ENCODE measurements at regions of chr6 and their contacts with region 1.

Region 1: DNA sequence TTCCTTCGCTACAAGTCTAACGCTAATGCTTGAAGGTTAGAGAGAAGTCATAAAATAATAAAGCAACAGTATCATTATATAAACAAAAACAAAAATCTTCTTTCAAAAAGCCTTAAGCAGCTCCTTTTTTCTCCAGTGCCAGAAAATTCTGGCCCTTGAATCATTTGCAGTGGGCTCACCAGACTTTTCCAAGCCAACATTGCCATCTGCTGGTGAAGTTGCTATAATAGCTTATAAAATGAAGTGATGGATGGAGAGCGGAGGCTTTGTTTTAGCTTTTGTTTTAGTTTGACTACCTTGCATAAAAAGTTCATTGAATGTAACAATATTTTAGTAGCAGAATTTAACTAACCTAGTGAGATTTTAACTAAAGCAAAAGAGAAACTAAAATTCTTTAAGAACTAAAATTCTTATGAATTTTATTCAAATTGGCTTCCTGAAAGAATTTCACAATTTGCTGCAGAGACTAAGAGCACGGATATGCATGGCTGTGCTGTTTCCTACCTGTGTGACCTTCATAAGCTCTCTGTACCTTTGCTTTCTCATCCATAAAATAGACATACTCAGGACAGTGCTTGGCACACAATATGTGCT is 44.8 kb upstream of the SLC2A12 start:
- DNase-seq: peak; percentile 75
- ATAC-seq: peak; percentile 71
- H3K4me3 ChIP-seq: no peak overlapping the region
- H3K27ac ChIP-seq: no peak overlapping the region
- H3K4me1 ChIP-seq: no peaks in the 10 kb centered on the region
- H3K27me3 ChIP-seq: peaks cover 8% of the 10 kb centered on the region
- CTCF ChIP-seq: peak; percentile 81
- POLR2A ChIP-seq: no peak
- RAD21 ChIP-seq: peak; percentile 92

Region 2: DNA sequence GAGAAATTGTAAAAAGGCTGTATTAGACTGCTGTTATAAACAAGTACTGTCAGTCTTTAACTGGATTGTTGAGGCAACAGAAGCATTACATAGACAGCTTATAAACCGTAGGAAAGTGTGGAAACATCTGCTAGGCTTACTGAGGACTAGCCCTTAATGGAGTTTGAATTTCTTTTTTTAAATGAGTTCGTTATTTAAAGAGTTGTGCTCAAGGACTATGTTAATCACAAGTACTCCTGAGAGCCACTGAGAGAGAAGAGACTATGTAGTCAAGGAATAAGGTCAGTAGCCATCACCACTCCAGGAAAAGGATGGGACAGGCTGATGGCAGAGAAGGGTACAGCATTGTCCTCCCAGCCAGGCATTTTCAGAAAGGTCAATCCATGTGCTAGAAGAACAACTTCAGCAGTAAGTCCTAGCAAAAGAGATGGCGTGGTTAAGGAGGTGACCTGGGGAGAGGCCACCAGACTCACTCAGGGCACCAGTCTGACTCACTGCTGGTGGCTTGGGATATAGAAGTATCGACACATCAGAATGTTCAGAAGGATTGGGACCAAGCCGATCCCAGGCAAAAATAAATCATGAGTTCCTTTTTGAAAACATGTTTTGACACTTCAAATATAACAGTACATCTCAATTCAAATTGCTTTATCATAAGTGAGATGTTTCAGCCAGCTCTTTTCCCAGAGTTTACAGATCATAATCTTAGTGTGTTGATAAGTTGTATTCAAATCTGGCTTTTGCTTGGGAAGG is 1276.4 kb before region 1 on chr6:
- CTCF ChIA-PET with region 1: no interaction called
- POLR2A ChIA-PET with region 1: no interaction called
- dilution Hi-C with region 1: no loop called
- in situ Hi-C with region 1: no loop called
- intact Hi-C with region 1: loop called (anchors 10 kb)
- DNase-seq: peak; percentile 52
- ATAC-seq: peak; percentile 41
- H3K4me3 ChIP-seq: no peak overlapping the region
- H3K27ac ChIP-seq: peak overlapping the region; percentile 42; the same call in 1 of the 2 replicates
- H3K4me1 ChIP-seq: peaks cover 4% of the 10 kb centered on the region
- H3K27me3 ChIP-seq: no peaks in the 10 kb centered on the region
- CTCF ChIP-seq: no peak
- POLR2A ChIP-seq: peak; percentile 45
- RAD21 ChIP-seq: no peak

Region 3: DNA sequence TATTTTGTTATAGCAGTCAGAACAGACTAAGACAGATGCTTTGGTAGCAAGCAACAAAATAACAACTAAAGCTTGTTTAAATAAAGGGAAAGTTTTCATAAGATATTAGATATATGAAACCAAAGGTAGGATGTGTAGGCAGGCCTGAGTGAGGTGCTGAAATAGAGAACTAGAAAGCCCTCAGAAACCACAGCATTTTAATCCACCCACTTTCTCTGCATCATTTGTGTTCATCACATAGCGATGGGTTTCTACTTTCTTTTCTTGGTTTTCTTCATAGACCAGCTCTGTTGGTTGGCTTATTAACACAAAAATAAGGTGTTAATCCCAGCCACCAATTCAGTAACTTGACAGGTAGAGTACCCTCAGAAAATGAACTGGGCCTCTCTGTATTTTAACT is 1224.3 kb before region 1 on chr6:
- CTCF ChIA-PET with region 1: no interaction called
- POLR2A ChIA-PET with region 1: no interaction called
- dilution Hi-C with region 1: no loop called
- in situ Hi-C with region 1: loop called (anchors 25 kb)
- intact Hi-C with region 1: no loop called
- DNase-seq: no peak
- ATAC-seq: no peak
- H3K4me3 ChIP-seq: no peak overlapping the region
- H3K27ac ChIP-seq: no peak overlapping the region
- H3K4me1 ChIP-seq: no peaks in the 10 kb centered on the region
- H3K27me3 ChIP-seq: peaks cover 2% of the 10 kb centered on the region; the same call in 1 of the 2 replicates
- CTCF ChIP-seq: no peak
- POLR2A ChIP-seq: no peak
- RAD21 ChIP-seq: no peak

Region 4: GRCh38 chr6:133314947-133315346 is 782.3 kb before region 1 on chr6:
- CTCF ChIA-PET with region 1: no interaction called
- POLR2A ChIA-PET with region 1: no interaction called
- dilution Hi-C with region 1: no loop called
- in situ Hi-C with region 1: no loop called
- intact Hi-C with region 1: no loop called
- DNase-seq: no peak
- ATAC-seq: no peak
- H3K4me3 ChIP-seq: no peak overlapping the region
- H3K27ac ChIP-seq: no peak overlapping the region
- H3K4me1 ChIP-seq: peaks cover 5% of the 10 kb centered on the region
- H3K27me3 ChIP-seq: no peaks in the 10 kb centered on the region
- CTCF ChIP-seq: no peak
- POLR2A ChIP-seq: no peak
- RAD21 ChIP-seq: no peak

Region 5: DNA sequence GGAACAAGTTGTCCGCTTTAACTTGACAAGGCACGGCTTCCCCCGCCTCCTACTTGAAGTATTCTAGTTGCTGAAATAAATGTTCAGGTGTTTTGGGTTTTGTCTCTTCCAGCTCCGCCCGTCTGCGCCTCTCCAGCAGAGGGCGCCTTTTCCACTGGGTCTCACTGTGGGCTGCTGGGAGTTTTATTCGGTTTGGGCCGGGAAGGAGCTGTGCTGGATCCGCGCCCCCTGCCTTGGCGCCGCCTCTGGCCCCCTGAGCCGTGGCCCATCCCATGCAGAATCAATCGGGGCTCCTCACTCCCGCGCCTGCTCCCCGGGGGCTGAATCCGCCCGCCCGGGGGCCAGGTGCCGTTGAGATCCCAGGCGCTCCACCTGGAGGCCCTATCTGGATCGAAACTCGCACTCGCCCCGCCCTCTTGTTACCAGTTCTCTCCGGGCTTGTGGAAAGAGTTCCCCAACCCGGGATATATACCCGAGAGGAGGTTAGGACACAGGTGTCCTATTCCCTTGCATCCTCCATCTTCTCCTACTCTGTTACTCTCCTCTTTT is 259.3 kb before region 1 on chr6:
- CTCF ChIA-PET with region 1: no interaction called
- POLR2A ChIA-PET with region 1: no interaction called
- dilution Hi-C with region 1: no loop called
- in situ Hi-C with region 1: no loop called
- intact Hi-C with region 1: loop called (anchors 10 kb)
- DNase-seq: no peak
- ATAC-seq: no peak
- H3K4me3 ChIP-seq: no peak overlapping the region
- H3K27ac ChIP-seq: no peak overlapping the region
- H3K4me1 ChIP-seq: peaks cover 8% of the 10 kb centered on the region
- H3K27me3 ChIP-seq: no peaks in the 10 kb centered on the region
- CTCF ChIP-seq: peak; percentile 30; the same call in 1 of the 2 replicates
- POLR2A ChIP-seq: no peak
- RAD21 ChIP-seq: peak; percentile 30

Region 6: DNA sequence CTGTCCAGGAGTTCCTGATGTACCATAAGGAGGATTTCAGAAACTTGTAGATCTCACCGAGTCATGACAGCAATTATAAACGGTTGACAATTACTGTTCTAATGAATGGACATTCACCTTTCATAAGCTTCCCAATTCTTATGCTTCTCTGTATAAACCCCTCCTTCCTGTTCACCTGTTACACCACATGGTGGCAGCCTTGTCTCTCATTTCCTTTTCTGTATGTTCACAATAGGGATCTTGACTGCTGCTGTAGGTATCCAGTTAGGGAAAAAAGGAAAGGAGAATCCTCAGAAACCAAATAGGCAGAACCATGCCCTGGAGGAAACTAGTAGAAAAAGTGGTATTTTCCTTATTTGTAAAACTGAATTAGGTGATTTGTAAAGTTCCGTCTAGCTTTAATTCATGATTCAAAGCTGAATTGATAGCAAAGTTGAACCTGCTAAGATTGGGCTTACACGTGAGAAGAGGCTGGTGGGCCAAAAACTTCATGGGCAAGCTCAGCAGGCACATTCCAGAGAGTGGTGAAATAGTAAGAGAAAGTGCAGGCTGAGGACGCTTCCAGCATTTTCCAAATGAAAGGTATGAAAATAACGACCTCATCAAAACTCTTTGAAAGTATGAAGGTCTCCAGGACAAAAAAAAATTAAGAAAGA is 173.1 kb before region 1 on chr6:
- CTCF ChIA-PET with region 1: interaction called, 88 read pairs
- POLR2A ChIA-PET with region 1: no interaction called
- dilution Hi-C with region 1: no loop called
- in situ Hi-C with region 1: loop called (anchors 5 kb)
- intact Hi-C with region 1: loop called (anchors 1 kb)
- DNase-seq: peak; percentile 84
- ATAC-seq: peak; percentile 96
- H3K4me3 ChIP-seq: no peak overlapping the region
- H3K27ac ChIP-seq: no peak overlapping the region
- H3K4me1 ChIP-seq: no peaks in the 10 kb centered on the region; the same call in 1 of the 2 replicates
- H3K27me3 ChIP-seq: no peaks in the 10 kb centered on the region; the same call in 1 of the 2 replicates
- CTCF ChIP-seq: peak; percentile 93
- POLR2A ChIP-seq: peak; percentile 49; the same call in 1 of the 2 replicates
- RAD21 ChIP-seq: peak; percentile 98

Region 7: DNA sequence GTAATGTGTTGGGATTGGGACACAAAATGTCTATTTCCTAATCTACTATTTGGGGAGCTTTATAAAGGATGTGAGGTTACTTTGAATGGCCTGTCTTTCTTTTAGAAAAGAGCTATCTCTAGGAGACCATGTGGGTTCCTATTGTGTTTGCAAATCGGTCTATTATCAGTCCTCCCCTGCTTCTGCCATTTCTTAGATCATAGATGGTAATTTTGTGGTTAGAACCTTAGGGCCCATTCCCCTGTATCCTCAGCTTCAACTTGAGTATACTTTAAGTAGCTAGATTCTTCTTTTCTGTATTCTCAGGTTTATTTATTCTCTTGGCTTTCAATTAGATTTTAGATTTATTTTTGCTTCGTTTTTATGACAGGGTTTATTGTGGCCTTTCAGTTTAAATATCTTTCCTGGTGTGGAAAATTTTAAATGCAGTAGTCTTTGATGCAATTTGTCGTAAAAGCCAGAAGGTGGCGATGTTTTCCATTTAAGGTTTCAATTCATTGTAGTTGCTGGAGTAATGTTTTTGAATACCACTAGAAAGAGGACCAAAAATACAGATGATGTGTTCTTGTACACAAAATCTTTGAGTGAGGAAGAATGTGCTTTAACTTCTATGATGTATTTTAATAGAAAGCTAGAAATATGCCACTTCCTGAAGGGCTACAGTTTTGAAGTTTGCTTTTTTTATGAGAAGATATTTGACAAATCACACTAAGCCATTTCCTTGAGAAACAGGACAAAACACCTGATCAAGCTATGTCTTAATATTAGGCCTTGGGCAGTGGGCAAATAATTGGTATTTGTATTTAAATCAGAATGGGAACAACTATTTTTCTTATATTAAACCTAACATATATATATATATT is 123.9 kb before region 1 on chr6:
- CTCF ChIA-PET with region 1: interaction called, 15 read pairs
- POLR2A ChIA-PET with region 1: no interaction called
- dilution Hi-C with region 1: no loop called
- in situ Hi-C with region 1: no loop called
- intact Hi-C with region 1: loop called (anchors 1 kb)
- DNase-seq: peak; percentile 72
- ATAC-seq: peak; percentile 74
- H3K4me3 ChIP-seq: no peak overlapping the region
- H3K27ac ChIP-seq: no peak overlapping the region
- H3K4me1 ChIP-seq: peaks cover 2% of the 10 kb centered on the region; the same call in 1 of the 2 replicates
- H3K27me3 ChIP-seq: no peaks in the 10 kb centered on the region
- CTCF ChIP-seq: peak; percentile 80
- POLR2A ChIP-seq: no peak
- RAD21 ChIP-seq: peak; percentile 78

Region 8: GRCh38 chr6:134063966-134064445 is 33.2 kb before region 1 on chr6:
- CTCF ChIA-PET with region 1: interaction called, 16 read pairs
- POLR2A ChIA-PET with region 1: no interaction called
- dilution Hi-C with region 1: no loop called
- in situ Hi-C with region 1: no loop called
- intact Hi-C with region 1: loop called (anchors 1 kb)
- DNase-seq: peak; percentile 85
- ATAC-seq: peak; percentile 89
- H3K4me3 ChIP-seq: no peak overlapping the region
- H3K27ac ChIP-seq: no peak overlapping the region
- H3K4me1 ChIP-seq: peaks cover 15% of the 10 kb centered on the region
- H3K27me3 ChIP-seq: no peaks in the 10 kb centered on the region
- CTCF ChIP-seq: peak; percentile 96
- POLR2A ChIP-seq: no peak
- RAD21 ChIP-seq: peak; percentile 86

Region 9: GRCh38 chr6:134315974-134316441 is 218.8 kb after region 1 on chr6:
- CTCF ChIA-PET with region 1: no interaction called
- POLR2A ChIA-PET with region 1: no interaction called
- dilution Hi-C with region 1: no loop called
- in situ Hi-C with region 1: no loop called
- intact Hi-C with region 1: no loop called
- DNase-seq: no peak
- ATAC-seq: no peak
- H3K4me3 ChIP-seq: no peak overlapping the region
- H3K27ac ChIP-seq: no peak overlapping the region
- H3K4me1 ChIP-seq: no peaks in the 10 kb centered on the region
- H3K27me3 ChIP-seq: no peaks in the 10 kb centered on the region
- CTCF ChIP-seq: no peak
- POLR2A ChIP-seq: no peak
- RAD21 ChIP-seq: no peak